ENCODE measurements at regions of chr22 and their contacts with region 1.

Region 1: GRCh38 chr22:33023153-33023827 is 34.9 kb downstream of the SYN3 start:
- DNase-seq: no peak
- ATAC-seq: no peak

Region 2: GRCh38 chr22:32850591-32851517 is 172.4 kb before region 1 on chr22:
- intact Hi-C with region 1: no loop called
- DNase-seq: peak; percentile 93
- ATAC-seq: peak; percentile 64

Region 3: DNA sequence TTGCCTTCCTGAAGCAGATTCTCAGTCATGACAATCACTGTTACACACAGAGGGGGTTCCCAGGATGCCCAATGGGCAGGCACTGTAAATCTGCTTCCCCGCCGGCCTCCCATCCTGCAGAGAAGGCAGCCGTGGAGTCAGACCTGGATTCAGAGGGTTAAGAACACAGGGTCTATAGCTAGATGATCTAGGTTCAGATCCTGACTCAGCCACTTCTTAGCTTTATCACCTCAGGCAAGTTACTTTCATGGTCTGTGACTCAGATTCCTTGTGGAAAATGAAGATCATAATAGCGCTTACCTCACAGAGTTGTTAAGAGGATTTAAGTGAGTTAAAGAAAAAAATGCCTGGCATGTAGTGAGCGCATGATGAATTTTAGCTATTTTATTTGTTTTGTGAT is 125.9 kb before region 1 on chr22:
- intact Hi-C with region 1: no loop called
- DNase-seq: no peak
- ATAC-seq: no peak

Region 4: DNA sequence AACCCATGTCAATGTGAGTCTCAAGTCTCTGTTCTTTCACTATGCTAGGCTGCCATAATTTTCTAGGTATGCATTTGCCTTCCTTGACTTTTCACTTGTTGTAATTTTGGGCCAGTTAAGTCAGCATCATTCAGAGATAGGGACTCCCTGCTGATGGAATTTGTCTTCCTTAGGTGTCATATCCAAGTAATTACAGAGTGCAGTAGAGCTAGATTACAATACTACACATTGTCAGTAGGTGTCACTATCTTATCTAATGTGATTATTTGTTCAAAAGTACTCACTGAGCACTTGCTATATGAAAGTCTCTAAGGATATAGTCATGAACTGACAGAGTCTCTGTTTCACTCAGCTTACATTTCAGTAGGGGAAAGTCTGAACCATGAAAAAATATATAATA is 59.9 kb after region 1 on chr22:
- intact Hi-C with region 1: no loop called
- DNase-seq: no peak
- ATAC-seq: no peak

Region 5: DNA sequence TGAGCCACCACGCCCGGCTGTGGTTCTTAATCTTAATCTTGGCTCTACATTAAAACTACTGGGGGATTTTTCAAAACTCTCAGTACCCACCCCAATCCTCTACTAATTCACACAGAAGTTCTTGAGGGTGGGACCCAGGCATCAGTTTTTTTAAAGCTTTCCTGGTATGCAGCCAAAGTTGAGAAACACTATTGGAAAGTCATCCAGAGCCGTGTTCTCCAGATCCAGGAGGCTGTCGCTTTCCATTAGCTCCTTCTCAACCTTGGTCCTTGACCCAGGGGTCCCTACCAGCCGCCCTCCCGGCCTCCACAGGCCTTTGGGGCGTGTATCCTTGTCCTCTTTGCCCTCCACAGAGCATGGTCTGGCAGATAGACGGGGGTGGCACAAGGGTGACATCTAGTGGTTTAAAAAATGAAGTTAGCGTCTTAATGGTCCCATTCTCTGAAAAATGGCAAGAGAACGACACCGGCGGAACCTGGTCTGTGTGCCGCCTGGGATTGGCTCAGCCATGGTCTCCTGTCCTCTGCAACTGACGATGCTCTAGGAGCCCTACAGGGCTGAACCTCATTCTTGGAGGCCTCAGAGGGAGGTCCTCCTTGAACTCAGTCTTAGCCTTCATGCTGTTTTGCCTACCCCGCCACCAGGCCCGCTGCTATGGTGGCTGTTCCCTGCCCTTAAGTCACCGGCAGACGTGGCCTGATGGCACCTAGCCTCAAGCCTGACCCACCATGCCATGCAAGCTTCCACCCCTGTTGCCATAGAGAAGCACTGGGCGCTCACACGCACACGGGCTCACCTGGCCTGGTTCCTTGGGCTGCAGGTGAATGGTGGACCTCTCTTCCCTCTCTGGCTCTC is 186.9 kb after region 1 on chr22:
- intact Hi-C with region 1: loop called (anchors 5 kb)
- DNase-seq: no peak
- ATAC-seq: peak; percentile 75

Measured in Right ventricle myocardium superior (tissue), 1 donor.